Esophagus muscularis mucosa (tissue), 4 donors: ENCODE measurements at regions of chr17 and their contacts with region 1.

Region 1: GRCh38 chr17:17303010-17303846 is at the start of gene NT5M:
- DNase-seq: no peak
- H3K4me3 ChIP-seq: peak within 1 kb of the TSS; percentile 67 to 78 (median 70)
- H3K27ac ChIP-seq: peak within 1 kb of the TSS; percentile 72 to 85 (median 77)
- H3K4me1 ChIP-seq: peaks cover 21 to 43% (median 32%) of the 10 kb centered on the region in 4 donors
- H3K27me3 ChIP-seq: no peaks in the 10 kb centered on the region
- CTCF ChIP-seq: no peak
- EP300 ChIP-seq: no peak
- POLR2A ChIP-seq: no peak
- total RNA-seq, gene NT5M: 4.3 to 11.5 (median 7.0) TPM

Region 2: DNA sequence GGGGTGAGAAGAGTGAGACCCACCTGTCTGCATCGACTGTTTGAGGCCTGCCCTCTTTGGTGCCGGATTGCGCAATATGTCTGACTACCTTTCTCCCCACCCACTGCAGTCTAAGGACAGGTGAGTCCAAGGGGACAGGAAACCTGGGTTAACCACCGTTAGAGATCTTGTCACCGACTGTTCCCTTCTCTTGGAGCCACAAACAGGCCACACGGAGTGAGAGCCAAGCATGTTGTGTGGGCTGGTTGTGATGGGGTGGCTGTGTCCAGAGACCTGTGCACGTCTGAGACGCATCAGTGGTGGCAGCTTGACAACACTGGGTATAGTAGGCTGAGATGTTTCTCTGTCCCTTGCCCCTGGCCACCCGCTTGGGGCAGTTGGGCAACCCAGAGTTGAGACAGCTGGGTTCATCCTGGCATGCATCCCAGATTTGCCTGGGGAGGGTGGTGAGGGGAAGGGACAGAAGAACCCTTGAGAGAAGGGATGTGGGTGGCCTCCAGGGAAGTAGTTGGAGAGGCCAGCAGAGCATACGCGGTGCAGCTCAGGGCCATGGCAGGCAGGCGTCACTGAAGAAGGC is 239.6 kb before region 1 on chr17:
- intact Hi-C with region 1: no loop called
- DNase-seq: no peak
- H3K4me3 ChIP-seq: no peak overlapping the region
- H3K27ac ChIP-seq: no peak overlapping the region
- H3K4me1 ChIP-seq: peaks cover 56 to 76% (median 63%) of the 10 kb centered on the region in 4 donors
- H3K27me3 ChIP-seq: no peaks in the 10 kb centered on the region
- CTCF ChIP-seq: no peak
- EP300 ChIP-seq: no peak
- POLR2A ChIP-seq: no peak

Region 3: DNA sequence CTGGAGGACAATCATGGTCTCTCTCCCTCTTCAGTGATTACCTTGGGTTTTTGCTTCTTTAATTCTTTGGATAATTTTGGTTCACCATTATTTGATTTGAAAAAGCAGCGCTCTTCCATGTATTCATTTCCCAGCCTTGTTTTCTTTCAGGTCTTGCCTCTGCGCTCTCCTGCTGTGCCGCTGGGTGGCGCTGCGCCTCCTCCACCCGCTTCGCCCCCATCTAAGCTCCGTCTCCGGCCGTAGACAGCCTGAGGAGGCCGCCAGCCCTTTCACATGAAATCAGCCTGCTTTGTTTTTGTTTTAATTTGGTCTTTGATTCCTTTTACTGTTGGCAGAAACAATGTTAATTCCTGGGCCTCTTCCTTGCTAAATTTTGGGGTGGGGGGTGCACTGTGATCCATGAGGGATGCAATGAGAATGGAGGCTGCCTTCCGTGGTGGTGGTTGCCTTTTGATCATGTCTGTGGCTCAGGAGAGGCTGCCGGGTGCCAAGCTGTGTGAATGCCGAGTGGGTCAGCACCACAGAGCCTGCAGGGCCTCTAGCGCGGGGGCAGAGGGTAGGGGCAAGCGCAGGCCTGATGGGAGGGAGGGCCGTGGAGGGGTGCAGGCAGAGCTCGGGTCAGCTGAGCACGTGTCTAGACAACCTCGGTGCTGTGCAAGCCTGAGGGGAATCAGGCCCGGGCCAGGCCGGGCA is 161.2 kb before region 1 on chr17:
- intact Hi-C with region 1: loop called (anchors 10 kb)
- DNase-seq: no peak
- H3K4me3 ChIP-seq: no peak overlapping the region
- H3K27ac ChIP-seq: peak overlapping the region in 2 of 4 donors; percentile 31 to 47
- H3K4me1 ChIP-seq: peaks cover 9 to 23% (median 19%) of the 10 kb centered on the region in 4 donors
- H3K27me3 ChIP-seq: no peaks in the 10 kb centered on the region
- CTCF ChIP-seq: peak; percentile 82 to 91 (median 83)
- EP300 ChIP-seq: no peak
- POLR2A ChIP-seq: no peak

Region 4: GRCh38 chr17:17280613-17281549 is 22.3 kb before region 1 on chr17 and contains the start of gene COPS3:
- intact Hi-C with region 1: loop called (anchors 2 kb)
- DNase-seq: peak; percentile 99
- H3K4me3 ChIP-seq: peak within 1 kb of the TSS; percentile 66 to 99 (median 82)
- H3K27ac ChIP-seq: peak within 1 kb of the TSS; percentile 91 to 100 (median 98)
- H3K4me1 ChIP-seq: peaks cover 19 to 46% (median 44%) of the 10 kb centered on the region in 4 donors
- H3K27me3 ChIP-seq: no peaks in the 10 kb centered on the region
- CTCF ChIP-seq: no peak
- EP300 ChIP-seq: no peak
- POLR2A ChIP-seq: peak; percentile 61
- total RNA-seq, gene COPS3: 49.3 to 72.6 (median 59.1) TPM